Activated T-helper 2 cell treated with anti-CD3 and anti-CD28 coated beads, Interferon-gamma antibody, Interleukin-2, Interleukin-4, amounts not matched to agents 10 μg/mL and 5 μg/mL and 100 μg/mL, durations not matched to agents 14 hours and 24 hours and 36 hours (primary cell): ENCODE measurements at regions of chr1 and their contacts with region 1.

Region 1: GRCh38 chr1:113928941-113929749 is at the start of gene HIPK1:
- DNase-seq: peak; percentile 90
- H3K4me3 Mint-ChIP-seq: peak within 1 kb of the TSS; percentile 97
- H3K27ac Mint-ChIP-seq: peak within 1 kb of the TSS; percentile 100
- H3K4me1 Mint-ChIP-seq: peaks cover 46% of the 10 kb centered on the region
- H3K27me3 Mint-ChIP-seq: peaks cover 1% of the 10 kb centered on the region
- total RNA-seq, gene HIPK1: 108 and 111 TPM in 2 replicates

Region 2: GRCh38 chr1:113759333-113760101 is 169.6 kb before region 1 on chr1 and contains the start of gene PHTF1:
- intact Hi-C with region 1: loop called (anchors 5 kb)
- DNase-seq: peak; percentile 54
- H3K4me3 Mint-ChIP-seq: peak within 1 kb of the TSS; percentile 95
- H3K27ac Mint-ChIP-seq: peak within 1 kb of the TSS; percentile 95
- H3K4me1 Mint-ChIP-seq: peaks cover 25% of the 10 kb centered on the region
- H3K27me3 Mint-ChIP-seq: no peaks in the 10 kb centered on the region
- total RNA-seq, gene PHTF1: 22.0 and 22.5 TPM in 2 replicates

Region 3: GRCh38 chr1:113811888-113812660 is 117.1 kb before region 1 on chr1 and contains the start of gene RSBN1:
- intact Hi-C with region 1: loop called (anchors 1 kb)
- DNase-seq: peak; percentile 99
- H3K4me3 Mint-ChIP-seq: peak within 1 kb of the TSS; percentile 97
- H3K27ac Mint-ChIP-seq: peak within 1 kb of the TSS; percentile 95
- H3K4me1 Mint-ChIP-seq: peaks cover 27% of the 10 kb centered on the region
- H3K27me3 Mint-ChIP-seq: no peaks in the 10 kb centered on the region
- total RNA-seq, gene RSBN1: 21.5 and 23.4 TPM in 2 replicates

Region 4: DNA sequence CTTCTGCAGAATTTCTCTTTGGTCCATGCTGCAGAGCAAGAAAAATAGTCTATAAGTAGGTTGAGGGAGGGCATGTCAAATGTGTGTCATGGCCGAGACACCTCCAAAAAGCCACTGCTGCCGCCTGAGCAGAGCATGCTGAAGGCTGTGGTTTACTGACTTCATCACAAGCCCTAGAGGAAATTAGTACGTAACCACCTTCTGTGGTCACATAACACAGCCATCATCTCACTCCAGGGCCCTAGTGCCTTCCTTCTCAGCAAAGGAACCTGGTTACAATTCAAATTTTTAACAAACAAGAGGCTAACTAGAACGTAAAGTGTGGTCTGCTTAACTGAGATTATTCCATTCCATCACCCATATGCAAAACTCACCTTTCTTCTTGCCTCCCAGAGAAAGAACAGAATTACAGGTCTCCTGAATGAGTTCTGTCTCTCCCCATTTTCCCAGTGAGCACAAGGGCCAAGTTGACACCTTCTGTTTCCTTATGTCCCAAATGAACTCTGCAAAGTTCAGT is 57.5 kb before region 1 on chr1 and contains the start of gene PTPN22:
- intact Hi-C with region 1: loop called (anchors 1 kb)
- DNase-seq: peak; percentile 81
- H3K4me3 Mint-ChIP-seq: peak within 1 kb of the TSS; percentile 86
- H3K27ac Mint-ChIP-seq: peak within 1 kb of the TSS; percentile 97
- H3K4me1 Mint-ChIP-seq: peaks cover 65% of the 10 kb centered on the region
- H3K27me3 Mint-ChIP-seq: no peaks in the 10 kb centered on the region
- total RNA-seq, gene PTPN22: 57.8 and 58.8 TPM in 2 replicates

Region 5: GRCh38 chr1:113940365-113941244 is 11.5 kb after region 1 on chr1:
- intact Hi-C with region 1: loop called (anchors 1 kb)
- DNase-seq: no peak
- H3K4me3 Mint-ChIP-seq: peak overlapping the region; percentile 57
- H3K27ac Mint-ChIP-seq: peak overlapping the region; percentile 83
- H3K4me1 Mint-ChIP-seq: peaks cover 66% of the 10 kb centered on the region
- H3K27me3 Mint-ChIP-seq: no peaks in the 10 kb centered on the region

Region 6: GRCh38 chr1:114192329-114192728 is 263.2 kb after region 1 on chr1:
- intact Hi-C with region 1: no loop called
- DNase-seq: no peak
- H3K4me3 Mint-ChIP-seq: no peak overlapping the region
- H3K27ac Mint-ChIP-seq: no peak overlapping the region
- H3K4me1 Mint-ChIP-seq: no peaks in the 10 kb centered on the region
- H3K27me3 Mint-ChIP-seq: peaks cover 8% of the 10 kb centered on the region

Region 7: GRCh38 chr1:114511032-114511785 is 582.1 kb after region 1 on chr1 and contains the start of gene TRIM33:
- intact Hi-C with region 1: loop called (anchors 2 kb)
- DNase-seq: peak; percentile 91
- H3K4me3 Mint-ChIP-seq: peak within 1 kb of the TSS; percentile 88
- H3K27ac Mint-ChIP-seq: peak within 1 kb of the TSS; percentile 97
- H3K4me1 Mint-ChIP-seq: peaks cover 41% of the 10 kb centered on the region
- H3K27me3 Mint-ChIP-seq: no peaks in the 10 kb centered on the region
- total RNA-seq, gene TRIM33: 41.5 and 44.7 TPM in 2 replicates